HepG2 (cell line): ENCODE measurements at regions of chr14 and their contacts with region 1.

Region 1: GRCh38 chr14:56339855-56340701 is 221.9 kb downstream of the PELI2 start:
- DNase-seq: peak; percentile 41
- ATAC-seq: peak; percentile 94
- H3K4me3 ChIP-seq: no peak overlapping the region
- H3K27ac ChIP-seq: no peak overlapping the region
- H3K4me1 ChIP-seq: no peaks in the 10 kb centered on the region
- H3K27me3 ChIP-seq: peaks cover 0 to 5% of the 10 kb centered on the region in 2 experiments; a peak in 3 of 5 replicates
- CTCF ChIP-seq: peak; percentile 73
- EP300 ChIP-seq: no peak
- POLR2A ChIP-seq: no peak
- RAD21 ChIP-seq: peak; percentile 60

Region 2: DNA sequence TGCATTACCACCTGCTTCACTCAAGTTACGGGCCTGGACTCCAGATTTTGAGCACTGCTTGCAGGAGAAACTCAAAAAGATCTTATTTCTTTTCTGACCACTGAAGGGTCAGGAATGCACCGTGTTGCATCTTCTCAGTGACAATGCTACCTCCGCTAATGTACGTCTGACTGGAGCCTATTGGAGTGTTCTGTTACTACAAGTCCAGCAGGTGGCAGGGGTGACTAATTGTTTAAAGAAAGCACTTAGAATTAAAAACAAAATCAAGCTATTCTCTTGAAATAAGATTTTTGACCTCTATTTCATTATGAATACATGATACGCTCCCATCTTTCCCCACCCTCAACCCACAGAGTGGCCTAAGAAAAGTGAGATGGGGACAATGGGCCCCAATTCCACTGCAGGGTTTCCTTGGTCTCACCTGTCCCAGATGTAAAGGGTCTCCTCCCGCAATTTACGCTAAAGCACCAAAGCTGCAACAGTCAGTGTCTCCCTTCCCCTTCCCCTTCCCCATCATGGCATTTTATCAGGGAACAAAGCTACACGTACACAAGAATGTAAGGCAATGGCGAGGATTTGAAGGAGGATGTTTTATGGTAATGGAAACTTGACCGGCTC is 901.9 kb before region 1 on chr14:
- CTCF ChIA-PET with region 1: no interaction called
- POLR2A ChIA-PET with region 1: no interaction called
- in situ Hi-C with region 1: loop called (anchors 5 kb)
- intact Hi-C with region 1: loop called (anchors 5 kb)
- DNase-seq: peak; percentile 55
- ATAC-seq: peak; percentile 82
- H3K4me3 ChIP-seq: no peak overlapping the region
- H3K27ac ChIP-seq: no peak overlapping the region
- H3K4me1 ChIP-seq: peaks cover 33% of the 10 kb centered on the region
- H3K27me3 ChIP-seq: no peaks in the 10 kb centered on the region
- CTCF ChIP-seq: peak; percentile 71
- EP300 ChIP-seq: no peak
- POLR2A ChIP-seq: no peak
- RAD21 ChIP-seq: peak; percentile 53; the same call in 1 of the 2 replicates

Region 3: GRCh38 chr14:55707365-55707804 is 632.7 kb before region 1 on chr14:
- CTCF ChIA-PET with region 1: interaction called, 15 read pairs
- POLR2A ChIA-PET with region 1: no interaction called
- in situ Hi-C with region 1: loop called (anchors 25 kb)
- intact Hi-C with region 1: loop called (anchors 2 kb)
- DNase-seq: peak; percentile 31
- ATAC-seq: 0 out of 3 replicates have a peak, but pooled peaks have one; percentile 35
- H3K4me3 ChIP-seq: no peak overlapping the region
- H3K27ac ChIP-seq: no peak overlapping the region
- H3K4me1 ChIP-seq: no peaks in the 10 kb centered on the region
- H3K27me3 ChIP-seq: no peaks in the 10 kb centered on the region
- CTCF ChIP-seq: peak; percentile 58
- EP300 ChIP-seq: no peak
- POLR2A ChIP-seq: no peak
- RAD21 ChIP-seq: peak; percentile 46

Region 4: DNA sequence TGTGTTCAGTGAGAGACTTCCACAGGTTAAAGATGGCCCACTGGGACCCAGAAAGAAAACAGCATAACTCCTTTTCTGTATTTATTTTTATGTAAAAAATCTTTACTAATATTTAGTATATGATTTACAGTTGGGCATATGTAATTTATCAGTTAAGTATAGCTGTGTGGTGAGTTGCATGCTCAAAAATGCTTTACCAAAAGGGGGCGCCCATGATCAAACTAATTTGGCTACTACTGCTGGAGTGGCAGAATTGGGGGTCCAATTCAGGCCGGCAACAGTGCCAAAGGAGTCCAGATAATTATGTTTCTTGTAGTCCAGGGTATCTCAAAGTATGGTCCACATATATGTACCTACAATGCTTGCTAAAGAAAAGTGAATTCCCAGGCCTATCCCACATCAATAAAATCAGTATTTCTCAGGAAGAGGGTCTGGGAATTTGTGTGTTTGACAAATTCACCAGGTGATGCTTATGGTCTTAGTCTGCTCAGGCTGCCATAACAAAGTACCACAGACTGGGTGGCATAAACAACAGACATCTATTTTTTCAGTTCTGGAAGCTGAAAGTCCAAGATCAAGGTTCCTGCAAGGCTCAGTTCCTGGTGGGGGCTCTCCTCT is 608.1 kb before region 1 on chr14:
- CTCF ChIA-PET with region 1: interaction called, 5 read pairs
- POLR2A ChIA-PET with region 1: no interaction called
- in situ Hi-C with region 1: no loop called
- intact Hi-C with region 1: loop called (anchors 10 kb)
- DNase-seq: peak; percentile 16
- ATAC-seq: peak; percentile 55; the same call in 2 of the 3 replicates
- H3K4me3 ChIP-seq: no peak overlapping the region
- H3K27ac ChIP-seq: no peak overlapping the region
- H3K4me1 ChIP-seq: no peaks in the 10 kb centered on the region
- H3K27me3 ChIP-seq: no peaks in the 10 kb centered on the region
- CTCF ChIP-seq: peak; percentile 54
- EP300 ChIP-seq: no peak
- POLR2A ChIP-seq: no peak
- RAD21 ChIP-seq: no peak

Region 5: GRCh38 chr14:56271970-56272369 is 68.1 kb before region 1 on chr14:
- CTCF ChIA-PET with region 1: no interaction called
- POLR2A ChIA-PET with region 1: no interaction called
- in situ Hi-C with region 1: no loop called
- intact Hi-C with region 1: no loop called
- DNase-seq: no peak
- ATAC-seq: no peak
- H3K4me3 ChIP-seq: no peak overlapping the region
- H3K27ac ChIP-seq: no peak overlapping the region
- H3K4me1 ChIP-seq: no peaks in the 10 kb centered on the region
- H3K27me3 ChIP-seq: peaks cover 0 to 4% of the 10 kb centered on the region in 2 experiments; a peak in 1 of 5 replicates
- CTCF ChIP-seq: no peak
- EP300 ChIP-seq: no peak
- POLR2A ChIP-seq: no peak
- RAD21 ChIP-seq: no peak